A549 (cell line): ENCODE measurements at regions of chr2 and their contacts with region 1.

Region 1: DNA sequence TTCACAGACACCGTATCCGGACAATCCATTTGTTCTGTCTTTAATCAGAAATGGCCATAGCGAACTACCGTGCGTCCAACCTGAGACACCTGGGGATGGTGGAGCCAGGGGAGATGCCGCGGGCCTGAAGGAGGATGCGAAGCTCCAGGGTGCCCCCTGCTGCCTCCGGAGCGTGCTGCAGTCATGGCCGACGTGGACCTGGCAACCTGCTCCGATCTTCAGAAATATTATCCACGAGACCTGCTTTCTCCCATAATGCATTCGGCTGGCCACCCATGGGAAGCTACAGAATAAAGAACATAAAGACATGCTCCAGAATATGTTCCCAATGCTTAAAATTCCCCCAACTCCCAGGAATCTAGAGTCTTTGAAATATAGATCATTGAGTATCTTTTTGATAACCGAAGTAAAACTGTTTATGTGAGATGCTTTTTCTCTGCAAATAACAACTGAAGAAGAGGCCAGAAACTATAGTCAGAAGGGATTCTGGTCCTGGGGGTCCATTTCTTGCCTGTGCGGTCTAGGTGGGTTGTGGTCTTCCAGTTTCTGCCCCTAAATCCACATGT is 30.7 kb upstream of the SLC66A3 start:
- DNase-seq: peak; percentile 77 to 85
- ATAC-seq: peak; percentile 83 to 93
- H3K4me3 ChIP-seq: no peak overlapping the region
- H3K27ac ChIP-seq: no peak overlapping the region; a peak in 1 of 6 replicates
- H3K4me1 ChIP-seq: 0 out of 3 replicates have a peak, but pooled peaks cover 2% of the 10 kb centered on the region
- CTCF ChIP-seq: peak; percentile 96
- EP300 ChIP-seq: no peak
- POLR2A ChIP-seq: no peak
- RAD21 ChIP-seq: peak; percentile 99

Region 2: GRCh38 chr2:10844097-10844496 is 280.5 kb before region 1 on chr2:
- CTCF ChIA-PET with region 1: interaction called, 1,025 read pairs
- POLR2A ChIA-PET with region 1: no interaction called
- DNase-seq: peak in 1 of 2 experiments; percentile 52
- ATAC-seq: peak; percentile 70 to 93; a peak in 5 of 6 replicates
- H3K4me3 ChIP-seq: no peak overlapping the region
- H3K27ac ChIP-seq: no peak overlapping the region; a peak in 1 of 6 replicates
- H3K4me1 ChIP-seq: peaks cover 9% of the 10 kb centered on the region; the same call in 1 of the 3 replicates
- CTCF ChIP-seq: no peak
- EP300 ChIP-seq: no peak
- POLR2A ChIP-seq: no peak
- RAD21 ChIP-seq: no peak

Region 3: GRCh38 chr2:10911261-10912075 is 213.1 kb before region 1 on chr2 and contains the start of gene KCNF1:
- CTCF ChIA-PET with region 1: interaction called, 123 read pairs
- POLR2A ChIA-PET with region 1: no interaction called
- DNase-seq: peak; percentile 79 to 83
- ATAC-seq: peak; percentile 75 to 82
- H3K4me3 ChIP-seq: peak within 1 kb of the TSS; percentile 57
- H3K27ac ChIP-seq: peak within 1 kb of the TSS; percentile 79 to 93
- H3K4me1 ChIP-seq: peaks cover 13% of the 10 kb centered on the region
- CTCF ChIP-seq: peak; percentile 52
- EP300 ChIP-seq: no peak
- POLR2A ChIP-seq: peak; percentile 38
- RAD21 ChIP-seq: peak; percentile 54 to 74
- polyA plus RNA-seq, gene KCNF1: 4.4 and 5.6 TPM in 2 replicates

Region 4: GRCh38 chr2:11073251-11073650 is 51.3 kb before region 1 on chr2:
- CTCF ChIA-PET with region 1: interaction called, 12 read pairs
- POLR2A ChIA-PET with region 1: no interaction called
- DNase-seq: peak in 1 of 2 experiments; percentile 54
- ATAC-seq: peak; percentile 51 to 85; a peak in 4 of 6 replicates
- H3K4me3 ChIP-seq: no peak overlapping the region
- H3K27ac ChIP-seq: no peak overlapping the region
- H3K4me1 ChIP-seq: no peaks in the 10 kb centered on the region
- CTCF ChIP-seq: peak; percentile 39
- EP300 ChIP-seq: no peak
- POLR2A ChIP-seq: no peak
- RAD21 ChIP-seq: peak; percentile 28 to 30; a peak in 3 of 5 replicates

Region 5: GRCh38 chr2:11112870-11113452 is 11.6 kb before region 1 on chr2:
- CTCF ChIA-PET with region 1: interaction called, 95 read pairs
- POLR2A ChIA-PET with region 1: no interaction called
- DNase-seq: no peak
- ATAC-seq: no peak
- H3K4me3 ChIP-seq: no peak overlapping the region
- H3K27ac ChIP-seq: no peak overlapping the region
- H3K4me1 ChIP-seq: no peaks in the 10 kb centered on the region
- CTCF ChIP-seq: no peak
- EP300 ChIP-seq: no peak
- POLR2A ChIP-seq: no peak
- RAD21 ChIP-seq: no peak